ENCODE measurements at regions of chr1 and their contacts with region 1.

Region 1: DNA sequence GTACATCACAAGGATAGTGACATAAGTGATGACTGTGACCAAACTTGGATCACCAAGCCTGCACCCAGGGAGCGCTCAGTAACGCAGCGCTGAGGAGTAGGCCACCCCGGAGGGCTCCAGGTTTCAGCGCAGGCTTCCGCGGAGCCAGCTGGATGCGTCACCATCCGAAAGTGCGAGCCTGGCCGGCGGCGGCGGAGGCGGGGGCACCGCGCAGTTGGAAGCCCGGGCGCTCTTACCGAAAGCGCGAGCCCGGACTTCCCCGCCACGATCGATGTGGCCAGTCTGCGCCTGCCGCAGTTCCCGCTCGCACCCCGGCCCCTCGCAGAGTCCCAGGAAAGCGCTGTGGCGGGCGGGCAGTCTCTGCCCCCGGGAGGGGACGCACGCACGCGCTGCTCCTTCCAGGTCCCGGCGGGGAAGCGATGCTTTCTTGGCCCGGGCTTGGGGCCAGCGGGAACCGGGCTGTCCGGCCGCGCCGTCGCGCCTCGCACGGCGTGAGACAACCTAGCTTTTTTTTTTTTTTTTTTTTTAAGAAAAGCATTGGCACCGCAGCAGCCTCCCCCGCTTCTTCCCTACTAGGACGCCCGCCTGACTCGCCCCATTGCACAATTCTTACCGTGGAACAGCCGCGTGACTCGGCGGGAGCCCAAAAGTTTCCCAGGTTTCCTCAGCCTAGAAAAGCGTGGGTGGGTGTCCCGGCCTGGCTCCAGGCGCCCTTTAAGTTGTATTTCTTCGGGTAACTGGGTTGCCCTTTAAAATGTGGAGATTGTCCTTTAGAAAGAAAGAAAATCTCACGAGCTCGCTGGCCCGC is 36.4 kb upstream of the JAK1 start:
- DNase-seq: peak; percentile 58
- H3K4me3 Mint-ChIP-seq: peak overlapping the region; percentile 74
- H3K27ac Mint-ChIP-seq: peak overlapping the region; percentile 25
- H3K4me1 Mint-ChIP-seq: peaks cover 25% of the 10 kb centered on the region
- H3K27me3 Mint-ChIP-seq: peaks cover 23% of the 10 kb centered on the region

Region 2: DNA sequence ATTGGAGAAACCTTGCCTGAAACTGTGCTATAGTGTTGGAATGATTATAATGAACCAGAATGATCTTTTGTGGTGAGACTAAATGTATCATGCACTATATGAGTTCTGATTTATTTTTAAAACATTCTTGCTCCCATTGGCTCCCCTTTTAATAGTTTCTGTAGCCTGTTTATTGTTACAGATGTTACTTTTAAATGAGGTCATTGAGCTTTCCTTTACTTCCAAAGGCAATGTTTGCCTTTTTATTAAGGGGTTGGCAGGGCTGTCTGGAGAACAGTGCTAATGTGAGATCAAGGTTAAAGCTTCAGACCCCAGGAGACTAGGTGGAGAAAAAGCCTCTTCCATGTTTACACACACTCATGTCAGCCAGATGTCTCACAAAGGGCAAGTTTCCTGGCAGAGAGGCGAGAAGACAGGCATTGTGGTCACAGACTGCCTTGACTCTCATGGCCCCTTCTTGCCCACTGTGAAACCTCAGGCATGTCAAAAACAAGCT is 378.4 kb before region 1 on chr1:
- intact Hi-C with region 1: no loop called
- DNase-seq: no peak
- H3K4me3 Mint-ChIP-seq: no peak overlapping the region
- H3K27ac Mint-ChIP-seq: no peak overlapping the region
- H3K4me1 Mint-ChIP-seq: peaks cover 5% of the 10 kb centered on the region
- H3K27me3 Mint-ChIP-seq: no peaks in the 10 kb centered on the region

Region 3: GRCh38 chr1:64891448-64891825 is 111.3 kb before region 1 on chr1:
- intact Hi-C with region 1: loop called (anchors 5 kb)
- DNase-seq: no peak
- H3K4me3 Mint-ChIP-seq: no peak overlapping the region
- H3K27ac Mint-ChIP-seq: no peak overlapping the region
- H3K4me1 Mint-ChIP-seq: peaks cover 88% of the 10 kb centered on the region
- H3K27me3 Mint-ChIP-seq: no peaks in the 10 kb centered on the region

Region 4: DNA sequence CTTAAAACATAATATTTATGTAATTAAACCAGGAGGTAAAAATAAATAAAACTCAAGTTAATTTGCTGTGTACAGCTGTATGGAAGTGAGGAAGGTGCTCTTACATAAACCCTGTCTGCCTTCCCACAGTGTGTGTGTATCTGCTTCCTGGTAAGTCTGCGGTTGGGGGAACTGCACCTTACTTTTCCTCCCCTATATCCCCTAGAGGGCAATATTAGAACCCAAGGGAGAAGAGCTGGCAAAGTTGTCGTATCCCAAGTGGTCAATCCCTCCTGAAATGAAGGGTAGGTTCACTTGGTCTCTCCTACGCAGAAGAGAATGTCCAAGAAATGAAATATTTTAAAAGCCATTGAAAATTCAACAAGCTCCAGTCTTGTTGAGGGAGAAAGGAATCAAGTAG is 18.6 kb before region 1 on chr1:
- intact Hi-C with region 1: loop called (anchors 2 kb)
- DNase-seq: no peak
- H3K4me3 Mint-ChIP-seq: no peak overlapping the region
- H3K27ac Mint-ChIP-seq: no peak overlapping the region
- H3K4me1 Mint-ChIP-seq: peaks cover 14% of the 10 kb centered on the region
- H3K27me3 Mint-ChIP-seq: peaks cover 5% of the 10 kb centered on the region

Region 5: DNA sequence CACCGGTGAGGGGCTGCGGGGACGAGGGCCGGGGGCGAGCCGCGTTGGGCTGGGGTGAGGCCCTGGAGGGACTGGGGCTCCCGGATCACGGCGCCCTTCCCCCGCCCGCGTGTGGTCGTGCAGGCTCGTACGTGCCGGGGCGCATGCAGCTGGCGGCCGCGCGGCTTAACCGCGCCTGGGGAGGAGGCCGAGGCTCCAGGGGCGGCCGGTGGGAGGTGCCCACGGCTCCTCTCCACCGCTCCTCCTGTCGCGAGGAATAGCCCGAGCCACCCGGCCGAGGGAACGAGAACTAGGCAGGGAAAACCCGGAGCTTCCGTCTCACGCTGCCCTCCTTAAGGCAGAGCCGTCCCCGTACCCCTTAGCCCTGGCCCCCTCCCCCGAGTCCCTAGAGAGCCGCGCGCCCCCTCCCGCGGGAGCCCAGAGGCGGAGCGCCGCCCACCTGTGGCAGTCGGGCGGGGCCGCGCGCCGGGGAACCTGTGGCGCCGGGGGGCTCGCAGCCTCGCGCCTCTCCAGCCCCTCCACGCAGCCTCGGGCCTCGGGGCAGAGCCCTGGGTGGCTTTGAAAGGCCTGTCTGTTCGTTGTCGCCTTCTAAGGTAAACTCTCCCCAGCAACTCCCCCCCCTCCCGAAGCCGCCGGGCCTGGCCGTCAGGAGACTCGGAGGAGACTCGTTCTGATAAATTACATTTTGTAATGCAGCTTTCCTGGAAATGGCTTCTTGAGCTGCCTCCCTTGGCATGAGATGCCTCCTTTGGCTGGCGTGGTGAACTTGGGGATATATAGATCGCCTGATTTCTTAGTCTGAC is 146.0 kb after region 1 on chr1:
- intact Hi-C with region 1: loop called (anchors 2 kb)
- DNase-seq: peak; percentile 55
- H3K4me3 Mint-ChIP-seq: peak overlapping the region; percentile 94
- H3K27ac Mint-ChIP-seq: peak overlapping the region; percentile 90
- H3K4me1 Mint-ChIP-seq: peaks cover 52% of the 10 kb centered on the region
- H3K27me3 Mint-ChIP-seq: peaks cover 7% of the 10 kb centered on the region